Aorta (tissue), 5 donors: ENCODE measurements at regions of chr12 and their contacts with region 1.

Region 1: DNA sequence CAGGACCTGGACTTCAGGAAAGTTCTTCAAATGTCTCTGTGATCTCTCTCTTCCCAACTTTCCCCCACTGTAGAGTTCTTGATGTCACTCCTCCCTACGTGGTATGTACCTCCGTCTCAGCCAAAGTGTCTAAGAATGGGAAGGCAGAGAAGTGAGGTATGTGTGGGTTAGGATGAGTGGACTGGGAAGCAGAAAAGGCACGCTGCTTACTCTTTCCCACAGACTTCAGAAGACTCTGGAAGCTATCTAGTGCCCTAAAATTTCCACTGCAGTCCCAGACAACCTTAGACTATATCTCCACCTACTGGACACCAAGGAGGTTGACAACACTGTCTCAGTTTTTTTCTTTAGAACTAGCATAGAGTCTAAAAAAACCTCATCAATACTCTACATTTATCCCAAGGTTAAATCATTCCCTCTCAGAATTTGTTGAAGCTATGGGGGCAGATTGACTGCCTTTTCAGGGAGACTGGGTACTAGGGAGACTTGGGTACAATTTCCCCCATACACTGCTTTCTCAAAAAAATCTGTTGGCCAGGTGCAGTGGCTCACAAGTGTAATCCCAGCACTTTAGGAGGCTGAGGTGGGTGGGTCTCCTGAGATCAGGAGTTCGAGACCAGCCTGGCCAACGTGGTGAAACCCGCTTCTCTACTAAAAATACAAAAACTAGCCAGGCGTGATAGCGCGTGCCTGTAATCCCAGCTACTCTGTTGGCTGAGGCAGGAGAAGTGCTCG is 20.6 kb upstream of the ITGA5 start:
- DNase-seq: no peak
- ATAC-seq: peak; percentile 92
- H3K4me3 ChIP-seq: no peak overlapping the region
- H3K27ac ChIP-seq: no peak overlapping the region
- H3K4me1 ChIP-seq: peaks cover 0 to 5% of the 10 kb centered on the region in 2 donors
- H3K27me3 ChIP-seq: no peaks in the 10 kb centered on the region

Region 2: GRCh38 chr12:54398995-54399793 is 40.5 kb before region 1 on chr12:
- intact Hi-C with region 1: loop called (anchors 1 to 2 kb)
- DNase-seq: peak; percentile 91 to 95
- ATAC-seq: peak; percentile 88
- H3K4me3 ChIP-seq: no peak overlapping the region
- H3K27ac ChIP-seq: no peak overlapping the region
- H3K4me1 ChIP-seq: no peaks in the 10 kb centered on the region
- H3K27me3 ChIP-seq: no peaks in the 10 kb centered on the region